Naive thymus-derived CD4-positive, alpha-beta T cell (primary cell): ENCODE measurements at regions of chr1 and their contacts with region 1.

Region 1: GRCh38 chr1:45018599-45019230 is 6.7 kb downstream of the UROD start:
- DNase-seq: peak in 8 of 9 donors; percentile 34 to 70 (median 58)
- ATAC-seq: peak; percentile 88
- H3K4me3 ChIP-seq: no peak overlapping the region
- H3K4me3 Mint-ChIP-seq: no peak overlapping the region
- H3K27ac ChIP-seq: no peak overlapping the region
- H3K27ac Mint-ChIP-seq: peak overlapping the region in 4 of 9 donors; percentile 15 to 91 (median 54)
- H3K4me1 ChIP-seq: peaks cover 0 to 5% of the 10 kb centered on the region in 2 donors
- H3K4me1 Mint-ChIP-seq: peaks cover 7 to 21% (median 17%) of the 10 kb centered on the region in 7 donors
- H3K27me3 ChIP-seq: no peaks in the 10 kb centered on the region
- H3K27me3 Mint-ChIP-seq: no peaks in the 10 kb centered on the region

Region 2: GRCh38 chr1:44174630-44175029 is 844.1 kb before region 1 on chr1:
- CTCF ChIA-PET with region 1: no interaction called
- POLR2A ChIA-PET with region 1: no interaction called
- intact Hi-C with region 1: no loop called
- DNase-seq: no peak
- ATAC-seq: no peak
- H3K4me3 ChIP-seq: no peak overlapping the region
- H3K4me3 Mint-ChIP-seq: no peak overlapping the region
- H3K27ac ChIP-seq: no peak overlapping the region
- H3K27ac Mint-ChIP-seq: no peak overlapping the region
- H3K4me1 ChIP-seq: no peaks in the 10 kb centered on the region
- H3K4me1 Mint-ChIP-seq: no peaks in the 10 kb centered on the region
- H3K27me3 ChIP-seq: no peaks in the 10 kb centered on the region
- H3K27me3 Mint-ChIP-seq: peaks cover 4 to 18% (median 13%) of the 10 kb centered on the region in 5 donors

Region 3: GRCh38 chr1:45071567-45071966 is 52.9 kb after region 1 on chr1:
- CTCF ChIA-PET with region 1: no interaction called
- POLR2A ChIA-PET with region 1: no interaction called
- intact Hi-C with region 1: no loop called
- DNase-seq: no peak
- ATAC-seq: no peak
- H3K4me3 ChIP-seq: no peak overlapping the region
- H3K4me3 Mint-ChIP-seq: no peak overlapping the region
- H3K27ac ChIP-seq: no peak overlapping the region
- H3K27ac Mint-ChIP-seq: no peak overlapping the region
- H3K4me1 ChIP-seq: no peaks in the 10 kb centered on the region
- H3K4me1 Mint-ChIP-seq: no peaks in the 10 kb centered on the region
- H3K27me3 ChIP-seq: no peaks in the 10 kb centered on the region
- H3K27me3 Mint-ChIP-seq: peaks cover 0 to 41% (median 0%) of the 10 kb centered on the region in 5 donors

Region 4: DNA sequence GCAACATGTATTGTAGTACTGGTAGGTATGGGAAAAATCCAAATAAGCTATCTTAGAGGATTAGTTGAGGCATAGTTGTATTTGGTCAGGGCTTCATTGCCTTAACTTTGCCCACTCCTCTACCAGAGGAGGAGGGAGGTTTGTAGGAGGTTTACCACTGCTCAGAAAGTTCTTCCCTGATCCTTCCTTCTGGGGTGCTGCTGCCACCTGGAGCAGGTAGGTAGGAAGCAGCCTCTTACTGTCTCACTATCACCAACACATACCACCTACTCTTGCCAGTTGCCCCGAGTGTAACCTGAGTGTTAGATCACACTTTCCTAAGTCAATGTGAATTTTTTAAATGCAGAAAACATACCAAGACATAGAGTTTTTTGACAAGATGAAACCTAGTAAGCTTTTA is 211.8 kb after region 1 on chr1:
- CTCF ChIA-PET with region 1: interaction called, 11 read pairs
- POLR2A ChIA-PET with region 1: interaction called, 3 read pairs
- intact Hi-C with region 1: loop called in 1 of 2 experiments (anchors 1 kb)
- DNase-seq: peak in 6 of 9 donors; percentile 5 to 49 (median 22)
- ATAC-seq: peak; percentile 49
- H3K4me3 ChIP-seq: no peak overlapping the region
- H3K4me3 Mint-ChIP-seq: no peak overlapping the region
- H3K27ac ChIP-seq: no peak overlapping the region
- H3K27ac Mint-ChIP-seq: peak overlapping the region in 1 of 9 donors; percentile 15
- H3K4me1 ChIP-seq: no peaks in the 10 kb centered on the region
- H3K4me1 Mint-ChIP-seq: no peaks in the 10 kb centered on the region
- H3K27me3 ChIP-seq: no peaks in the 10 kb centered on the region
- H3K27me3 Mint-ChIP-seq: peaks cover 0 to 4% (median 0%) of the 10 kb centered on the region in 5 donors